WTC11 (cell line): ENCODE measurements at regions of chr12 and their contacts with region 1.

Region 1: GRCh38 chr12:57865090-57865751 is 18.7 kb upstream of the CTDSP2 start:
- DNase-seq: peak; percentile 74
- ATAC-seq: peak; percentile 56
- H3K4me3 Mint-ChIP-seq: peak overlapping the region; percentile 61
- H3K27ac Mint-ChIP-seq: no peak overlapping the region
- H3K4me1 Mint-ChIP-seq: peaks cover 36% of the 10 kb centered on the region
- H3K27me3 Mint-ChIP-seq: peaks cover 40% of the 10 kb centered on the region
- CTCF ChIP-seq: no peak

Region 2: DNA sequence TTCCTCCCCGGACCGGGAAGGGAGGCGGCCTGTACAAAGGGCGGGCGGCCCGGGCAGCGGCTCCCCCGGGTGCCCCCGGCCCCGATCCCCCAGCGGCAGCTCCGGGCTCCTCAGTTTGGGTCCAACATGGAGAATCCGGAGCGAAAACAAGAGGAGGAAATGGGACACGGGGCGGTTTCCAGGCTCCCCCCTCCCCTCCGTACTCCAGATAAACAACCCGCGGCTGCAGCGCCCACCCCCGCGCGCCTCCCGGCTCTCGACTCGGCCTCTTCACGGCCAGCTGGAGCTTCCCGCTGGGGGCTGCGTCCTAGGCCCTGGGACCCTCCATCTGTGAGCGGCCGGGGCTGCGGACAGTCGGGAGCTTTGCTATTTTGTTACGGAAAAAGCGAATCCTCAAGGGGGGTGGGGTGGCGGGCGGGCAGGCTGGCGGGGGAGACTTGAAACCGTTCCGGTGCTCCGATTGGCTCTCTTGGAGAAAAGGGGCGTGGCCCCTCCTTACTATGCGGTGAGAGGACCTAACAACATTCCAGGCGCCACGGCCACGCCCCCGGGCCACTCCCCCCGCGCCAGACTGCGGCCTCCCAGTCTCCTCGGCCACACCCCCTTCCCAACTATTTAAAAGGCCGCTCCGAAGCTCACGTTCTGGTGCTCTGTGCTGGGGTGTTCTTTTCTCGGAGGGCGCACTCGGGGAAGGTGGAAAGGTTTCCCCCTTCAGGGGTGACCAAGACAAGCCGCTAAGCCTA is 18.5 kb before region 1 on chr12 and contains the start of gene CTDSP2:
- CTCF ChIA-PET with region 1: interaction called, 40 read pairs
- POLR2A ChIA-PET with region 1: interaction called, 22 read pairs
- DNase-seq: peak; percentile 100
- ATAC-seq: peak; percentile 65
- H3K4me3 Mint-ChIP-seq: peak within 1 kb of the TSS; percentile 69
- H3K27ac Mint-ChIP-seq: peak within 1 kb of the TSS; percentile 95
- H3K4me1 Mint-ChIP-seq: peaks cover 51% of the 10 kb centered on the region
- H3K27me3 Mint-ChIP-seq: peaks cover 14% of the 10 kb centered on the region
- CTCF ChIP-seq: no peak
- total RNA-seq, gene CTDSP2: 97.0 to 122 TPM (median 101 TPM) in 3 replicates

Region 3: DNA sequence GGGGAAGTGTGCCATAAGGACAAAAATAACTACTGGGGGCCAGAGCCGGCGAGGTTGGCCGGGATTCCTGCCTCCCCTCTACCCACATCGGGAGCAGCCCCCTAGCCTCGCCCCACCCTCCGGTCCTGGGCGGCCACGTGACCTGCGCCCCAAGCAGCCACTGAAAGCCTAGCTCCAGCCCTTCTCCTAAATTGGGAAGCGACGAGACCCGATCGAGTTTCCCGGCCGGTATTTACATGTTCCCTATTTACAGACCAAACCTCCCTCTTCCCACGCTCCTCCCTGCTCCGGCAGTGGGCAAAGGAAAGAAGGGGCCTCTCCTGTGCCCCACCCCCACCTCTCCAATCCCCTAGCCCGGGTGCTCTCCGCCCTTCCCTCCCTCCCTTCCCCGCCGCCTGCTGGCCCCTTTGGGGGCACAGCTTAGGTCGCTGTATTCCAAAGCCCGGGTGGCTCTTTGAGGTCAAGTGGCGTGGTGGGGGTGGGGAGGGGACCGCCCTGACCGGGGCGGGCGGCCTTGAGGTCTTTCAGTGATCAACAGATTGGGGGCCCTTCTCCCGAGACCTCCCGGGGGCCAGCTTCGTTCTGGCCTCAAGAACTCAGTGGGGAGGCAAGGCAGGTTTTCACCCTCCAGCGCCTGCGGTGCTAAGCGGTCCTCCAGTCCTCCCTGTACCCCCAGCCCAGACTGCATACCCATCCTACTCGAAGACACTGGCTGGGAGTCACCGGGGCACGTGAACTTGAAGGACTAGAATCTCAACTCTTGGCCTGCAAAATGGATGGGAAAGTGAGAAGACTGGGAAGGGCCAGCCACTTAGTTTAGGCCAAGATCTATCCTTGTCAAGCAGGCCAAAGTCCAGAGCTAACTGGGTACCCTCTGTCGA is 12.4 kb before region 1 on chr12:
- CTCF ChIA-PET with region 1: interaction called, 40 read pairs
- POLR2A ChIA-PET with region 1: interaction called, 22 read pairs
- DNase-seq: peak; percentile 83
- ATAC-seq: peak; percentile 82
- H3K4me3 Mint-ChIP-seq: peak overlapping the region; percentile 66
- H3K27ac Mint-ChIP-seq: peak overlapping the region; percentile 91
- H3K4me1 Mint-ChIP-seq: peaks cover 40% of the 10 kb centered on the region
- H3K27me3 Mint-ChIP-seq: peaks cover 25% of the 10 kb centered on the region
- CTCF ChIP-seq: no peak